Heart right ventricle (tissue), 16 donors: ENCODE measurements at regions of chr13 and their contacts with region 1.

Region 1: GRCh38 chr13:30892966-30893365 is 13.1 kb upstream of the MEDAG start:
- DNase-seq: peak in 1 of 2 donors; percentile 57
- ATAC-seq: peak in 6 of 8 donors; percentile 20 to 86 (median 36)
- H3K4me3 ChIP-seq: no peak overlapping the region
- H3K27ac ChIP-seq: no peak overlapping the region
- H3K4me1 ChIP-seq: peaks cover 0 to 14% (median 0%) of the 10 kb centered on the region in 9 donors
- H3K27me3 ChIP-seq: peaks cover 0 to 3% (median 0%) of the 10 kb centered on the region in 7 donors
- CTCF ChIP-seq: peak in 6 of 9 donors; percentile 31 to 49 (median 35)

Region 2: DNA sequence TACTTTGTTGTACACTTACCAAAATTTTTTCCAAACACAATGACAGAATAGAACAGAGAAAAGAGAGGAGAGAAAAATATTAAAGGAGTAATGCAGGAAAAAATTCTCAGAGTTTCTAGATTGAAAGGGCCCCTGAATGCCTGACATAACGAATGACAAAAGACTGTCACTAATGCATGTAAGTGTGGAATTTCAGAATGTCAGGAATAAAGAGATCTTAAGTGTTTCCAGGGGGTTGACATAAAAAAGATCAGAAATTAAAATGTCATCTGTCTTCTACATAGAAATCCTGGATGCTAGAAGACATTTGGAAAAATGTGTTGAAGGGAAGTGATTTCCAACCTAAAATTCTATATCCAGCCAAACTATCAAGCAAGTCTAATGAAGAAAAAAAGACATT is 66.7 kb after region 1 on chr13:
- intact Hi-C with region 1: loop called in 1 of 10 experiments (anchors 2 kb)
- DNase-seq: no peak
- ATAC-seq: no peak
- H3K4me3 ChIP-seq: no peak overlapping the region
- H3K27ac ChIP-seq: no peak overlapping the region
- H3K4me1 ChIP-seq: peaks cover 0 to 10% (median 0%) of the 10 kb centered on the region in 9 donors
- H3K27me3 ChIP-seq: peaks cover 0 to 11% (median 0%) of the 10 kb centered on the region in 7 donors
- CTCF ChIP-seq: no peak